ENCODE measurements at regions of chr7 and their contacts with region 1.

Region 1: GRCh38 chr7:123865517-123866117 is 20.6 kb downstream of the HYAL4 start:
- DNase-seq: peak; percentile 65
- ATAC-seq: peak; percentile 96
- H3K4me3 Mint-ChIP-seq: no peak overlapping the region
- H3K27ac Mint-ChIP-seq: no peak overlapping the region
- H3K4me1 Mint-ChIP-seq: no peaks in the 10 kb centered on the region
- H3K27me3 Mint-ChIP-seq: peaks cover 13% of the 10 kb centered on the region
- CTCF ChIP-seq: peak; percentile 76

Region 2: DNA sequence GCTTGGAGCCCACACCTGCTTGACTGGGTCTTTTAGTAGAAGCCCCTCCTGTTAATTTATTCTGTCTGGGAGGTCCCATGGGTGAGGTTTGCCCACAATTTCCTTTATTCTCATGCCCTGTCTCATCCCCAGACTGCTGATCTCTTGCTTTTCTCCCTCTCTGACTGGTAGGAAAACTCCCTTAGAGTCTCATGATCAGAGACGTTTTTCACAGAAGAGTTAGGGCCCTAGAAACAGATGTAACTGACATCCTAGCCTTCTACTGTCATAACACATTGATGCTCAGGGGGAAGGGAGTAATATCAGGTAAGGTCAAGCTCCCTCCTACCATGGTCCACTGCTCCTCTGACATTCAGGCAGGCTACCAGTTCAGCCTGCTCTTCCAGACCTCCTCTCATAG is 73.1 kb before region 1 on chr7:
- CTCF ChIA-PET with region 1: interaction called, 118 read pairs
- POLR2A ChIA-PET with region 1: interaction called, 3 read pairs
- intact Hi-C with region 1: no loop called
- DNase-seq: no peak
- ATAC-seq: no peak
- H3K4me3 Mint-ChIP-seq: no peak overlapping the region
- H3K27ac Mint-ChIP-seq: no peak overlapping the region
- H3K4me1 Mint-ChIP-seq: peaks cover 7% of the 10 kb centered on the region
- H3K27me3 Mint-ChIP-seq: no peaks in the 10 kb centered on the region
- CTCF ChIP-seq: no peak

Region 3: DNA sequence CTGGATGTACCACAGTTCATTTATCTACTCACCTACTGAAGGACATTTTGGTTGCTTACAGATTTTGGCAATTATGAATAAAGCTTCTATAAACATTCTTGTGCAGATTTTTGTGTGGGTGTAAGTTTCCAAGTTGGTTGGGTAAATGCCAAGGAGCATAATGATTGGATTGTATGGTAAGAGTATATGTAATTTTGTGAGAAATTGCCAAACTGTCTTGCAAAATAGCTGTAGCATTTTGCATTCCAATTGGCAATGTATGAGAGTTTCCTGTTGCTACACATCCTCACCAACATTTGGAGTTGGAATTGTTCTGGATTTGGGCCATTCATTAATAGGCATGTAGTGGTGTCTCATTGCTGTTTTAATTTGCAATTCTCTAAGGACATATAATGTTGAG is 54.6 kb before region 1 on chr7:
- CTCF ChIA-PET with region 1: interaction called, 10 read pairs
- POLR2A ChIA-PET with region 1: no interaction called
- intact Hi-C with region 1: no loop called
- DNase-seq: no peak
- ATAC-seq: no peak
- H3K4me3 Mint-ChIP-seq: no peak overlapping the region
- H3K27ac Mint-ChIP-seq: no peak overlapping the region
- H3K4me1 Mint-ChIP-seq: no peaks in the 10 kb centered on the region
- H3K27me3 Mint-ChIP-seq: no peaks in the 10 kb centered on the region
- CTCF ChIP-seq: no peak

Region 4: DNA sequence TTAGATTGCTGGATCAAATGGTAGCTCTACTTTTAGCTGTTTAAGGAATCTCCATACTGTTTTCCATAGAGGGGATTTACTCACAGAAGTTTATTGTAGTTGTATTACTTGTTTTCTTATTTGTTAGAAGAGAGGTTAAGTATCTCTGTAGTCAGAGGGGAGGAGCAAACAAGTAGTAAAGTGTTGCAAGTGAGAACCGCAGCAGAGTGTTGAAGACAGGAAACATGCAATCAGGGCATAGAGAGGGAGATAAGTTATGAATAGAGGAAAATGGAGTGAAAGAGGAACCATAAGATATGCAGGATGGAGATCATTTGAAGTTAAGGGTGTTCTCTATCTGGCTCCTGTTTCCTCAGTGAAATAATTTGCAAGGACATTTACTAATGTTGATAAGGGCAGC is 498.7 kb after region 1 on chr7:
- CTCF ChIA-PET with region 1: no interaction called
- POLR2A ChIA-PET with region 1: no interaction called
- intact Hi-C with region 1: no loop called
- DNase-seq: no peak
- ATAC-seq: no peak
- H3K4me3 Mint-ChIP-seq: no peak overlapping the region
- H3K27ac Mint-ChIP-seq: no peak overlapping the region
- H3K4me1 Mint-ChIP-seq: no peaks in the 10 kb centered on the region
- H3K27me3 Mint-ChIP-seq: no peaks in the 10 kb centered on the region
- CTCF ChIP-seq: no peak